Aorta (tissue), 5 donors: ENCODE measurements at regions of chr3 and their contacts with region 1.

Region 1: GRCh38 chr3:21894459-21895340 is 143.7 kb upstream of the ZNF385D start:
- DNase-seq: no peak
- ATAC-seq: peak; percentile 69
- H3K4me3 ChIP-seq: no peak overlapping the region
- H3K27ac ChIP-seq: no peak overlapping the region
- H3K4me1 ChIP-seq: no peaks in the 10 kb centered on the region
- H3K27me3 ChIP-seq: no peaks in the 10 kb centered on the region

Region 2: GRCh38 chr3:20225769-20226168 is 1668.9 kb before region 1 on chr3:
- intact Hi-C with region 1: loop called in 1 of 2 experiments (anchors 5 kb)
- DNase-seq: no peak
- ATAC-seq: no peak
- H3K4me3 ChIP-seq: no peak overlapping the region
- H3K27ac ChIP-seq: no peak overlapping the region
- H3K4me1 ChIP-seq: no peaks in the 10 kb centered on the region
- H3K27me3 ChIP-seq: no peaks in the 10 kb centered on the region

Region 3: DNA sequence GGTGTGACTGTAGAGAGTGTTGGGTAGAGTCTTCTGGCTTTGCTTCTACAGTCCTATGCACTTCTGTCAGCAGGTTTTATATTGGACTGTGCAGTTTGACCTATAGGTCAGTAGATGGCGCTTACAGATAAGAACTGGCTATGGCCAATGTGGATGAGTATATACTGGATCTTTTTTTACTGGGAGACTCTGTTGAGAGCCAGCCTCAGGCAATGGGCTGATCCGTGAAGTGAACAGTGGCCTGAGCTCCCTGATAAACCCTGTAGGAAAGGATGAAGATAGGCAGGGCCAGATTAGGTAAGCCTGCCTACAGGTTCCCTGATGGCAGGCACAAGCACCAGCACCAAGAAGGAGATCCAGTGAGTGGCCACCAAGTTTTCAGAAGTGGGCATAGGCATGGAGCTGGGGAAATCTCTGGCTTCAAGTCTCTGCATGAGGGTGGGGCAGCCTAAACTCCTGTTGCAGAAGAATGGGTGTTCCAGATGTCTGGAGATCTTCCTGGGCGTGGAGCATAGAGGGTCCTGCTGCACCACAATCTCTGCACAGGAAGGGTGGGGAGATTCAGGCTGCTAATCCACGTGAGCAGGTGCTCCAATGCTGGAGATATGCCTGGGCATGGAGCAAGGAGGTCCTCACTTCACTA is 1382.7 kb before region 1 on chr3:
- intact Hi-C with region 1: loop called in 1 of 2 experiments (anchors 10 kb)
- DNase-seq: no peak
- ATAC-seq: peak; percentile 71
- H3K4me3 ChIP-seq: no peak overlapping the region
- H3K27ac ChIP-seq: no peak overlapping the region
- H3K4me1 ChIP-seq: no peaks in the 10 kb centered on the region
- H3K27me3 ChIP-seq: no peaks in the 10 kb centered on the region

Region 4: DNA sequence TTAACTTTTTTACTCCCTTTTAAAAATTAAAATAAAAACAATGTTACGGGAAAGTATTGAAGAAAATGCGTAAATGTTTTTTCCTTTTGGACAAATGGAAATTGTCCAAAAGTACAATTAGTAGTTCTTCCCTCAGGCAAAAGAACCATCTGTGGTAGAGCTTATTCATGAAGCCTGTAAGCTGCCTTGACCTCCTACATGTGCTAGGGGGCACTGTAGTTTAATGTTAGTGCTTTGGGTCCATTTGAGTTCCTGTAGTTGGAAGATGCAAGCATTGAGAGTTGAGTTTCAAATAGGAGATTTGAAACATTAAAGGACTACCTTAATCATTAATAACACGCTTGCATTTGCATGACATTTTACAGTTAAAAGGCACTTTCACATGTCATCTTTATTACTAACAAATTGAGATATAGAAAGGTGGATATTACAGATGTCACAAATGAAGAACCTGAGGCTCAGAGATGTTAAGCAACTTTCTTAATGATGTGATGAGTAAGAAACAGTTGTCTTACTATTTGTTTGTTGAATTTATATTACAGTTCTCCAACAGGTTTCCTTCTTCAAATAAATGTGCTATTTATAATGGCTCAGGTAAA is 141.9 kb before region 1 on chr3:
- intact Hi-C with region 1: loop called (anchors 2 to 5 kb)
- DNase-seq: peak in 1 of 2 donors; percentile 29
- ATAC-seq: peak; percentile 72
- H3K4me3 ChIP-seq: no peak overlapping the region
- H3K27ac ChIP-seq: no peak overlapping the region
- H3K4me1 ChIP-seq: no peaks in the 10 kb centered on the region
- H3K27me3 ChIP-seq: no peaks in the 10 kb centered on the region

Region 5: GRCh38 chr3:21847005-21847404 is 47.7 kb before region 1 on chr3:
- intact Hi-C with region 1: loop called in 1 of 2 experiments (anchors 5 kb)
- DNase-seq: no peak
- ATAC-seq: no peak
- H3K4me3 ChIP-seq: no peak overlapping the region
- H3K27ac ChIP-seq: no peak overlapping the region
- H3K4me1 ChIP-seq: no peaks in the 10 kb centered on the region
- H3K27me3 ChIP-seq: no peaks in the 10 kb centered on the region